CD8-positive, alpha-beta memory T cell (primary cell): ENCODE measurements at regions of chr1 and their contacts with region 1.

Region 1: GRCh38 chr1:108512239-108512981 is 47.5 kb upstream of the EEIG2 start:
- DNase-seq: peak in 2 of 5 donors; percentile 37 to 48
- H3K4me3 ChIP-seq: no peak overlapping the region
- H3K4me3 Mint-ChIP-seq: no peak overlapping the region
- H3K27ac ChIP-seq: no peak overlapping the region
- H3K27ac Mint-ChIP-seq: no peak overlapping the region
- H3K4me1 ChIP-seq: no peaks in the 10 kb centered on the region
- H3K4me1 Mint-ChIP-seq: no peaks in the 10 kb centered on the region
- H3K27me3 ChIP-seq: no peaks in the 10 kb centered on the region
- H3K27me3 Mint-ChIP-seq: peaks cover 2 to 7% of the 10 kb centered on the region in 2 donors

Region 2: GRCh38 chr1:108570128-108570527 is 57.7 kb after region 1 on chr1:
- CTCF ChIA-PET with region 1: interaction called, 11 read pairs
- POLR2A ChIA-PET with region 1: no interaction called
- DNase-seq: peak in 2 of 5 donors; percentile 21 to 26
- H3K4me3 ChIP-seq: no peak overlapping the region
- H3K4me3 Mint-ChIP-seq: no peak overlapping the region
- H3K27ac ChIP-seq: no peak overlapping the region
- H3K27ac Mint-ChIP-seq: no peak overlapping the region
- H3K4me1 ChIP-seq: no peaks in the 10 kb centered on the region
- H3K4me1 Mint-ChIP-seq: peaks cover 3 to 14% (median 4%) of the 10 kb centered on the region in 3 donors
- H3K27me3 ChIP-seq: no peaks in the 10 kb centered on the region
- H3K27me3 Mint-ChIP-seq: no peaks in the 10 kb centered on the region